A549 (cell line): ENCODE measurements at regions of chr1 and their contacts with region 1.

Region 1: DNA sequence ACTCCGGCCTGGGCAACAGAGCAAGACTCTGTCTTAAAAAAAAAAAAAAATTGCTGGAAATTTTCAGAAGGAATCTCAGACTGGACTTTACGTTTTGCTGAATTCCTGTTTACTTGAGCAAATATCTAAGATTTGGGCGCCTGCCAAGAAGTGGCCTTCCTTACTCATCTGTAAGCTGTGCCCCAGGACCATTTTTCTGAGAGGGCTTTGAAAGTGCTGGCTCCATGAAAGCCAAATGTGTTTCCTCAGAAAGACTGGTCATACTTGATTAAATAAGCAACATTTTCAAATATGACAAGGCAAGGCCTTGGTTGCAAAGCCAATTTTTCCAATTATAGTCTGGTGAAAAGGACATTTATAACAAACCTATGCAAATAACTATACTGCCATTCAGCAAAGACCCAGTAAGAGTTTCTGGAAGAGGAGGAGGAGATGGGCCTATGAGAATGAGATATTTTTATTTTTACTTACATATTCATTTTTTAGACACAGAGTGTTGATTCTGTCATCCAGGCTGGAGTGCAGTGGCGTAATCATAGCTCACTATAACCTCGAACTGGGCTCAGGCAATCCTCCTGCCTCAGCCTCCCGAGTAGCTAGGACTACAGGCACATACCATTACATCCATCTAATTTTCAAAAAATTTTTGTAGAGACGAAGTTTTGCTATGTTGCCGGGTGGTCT is 56.3 kb upstream of the HTR1D start:
- DNase-seq: peak; percentile 28 to 88
- ATAC-seq: peak; percentile 82 to 88
- H3K4me3 ChIP-seq: no peak overlapping the region
- H3K27ac ChIP-seq: peak overlapping the region; percentile 74 to 83
- H3K4me1 ChIP-seq: peaks cover 61% of the 10 kb centered on the region
- CTCF ChIP-seq: no peak
- EP300 ChIP-seq: peak; percentile 19 to 30; a peak in 2 of 5 replicates
- POLR2A ChIP-seq: no peak
- RAD21 ChIP-seq: peak; percentile 19 to 27; a peak in 3 of 5 replicates

Region 2: DNA sequence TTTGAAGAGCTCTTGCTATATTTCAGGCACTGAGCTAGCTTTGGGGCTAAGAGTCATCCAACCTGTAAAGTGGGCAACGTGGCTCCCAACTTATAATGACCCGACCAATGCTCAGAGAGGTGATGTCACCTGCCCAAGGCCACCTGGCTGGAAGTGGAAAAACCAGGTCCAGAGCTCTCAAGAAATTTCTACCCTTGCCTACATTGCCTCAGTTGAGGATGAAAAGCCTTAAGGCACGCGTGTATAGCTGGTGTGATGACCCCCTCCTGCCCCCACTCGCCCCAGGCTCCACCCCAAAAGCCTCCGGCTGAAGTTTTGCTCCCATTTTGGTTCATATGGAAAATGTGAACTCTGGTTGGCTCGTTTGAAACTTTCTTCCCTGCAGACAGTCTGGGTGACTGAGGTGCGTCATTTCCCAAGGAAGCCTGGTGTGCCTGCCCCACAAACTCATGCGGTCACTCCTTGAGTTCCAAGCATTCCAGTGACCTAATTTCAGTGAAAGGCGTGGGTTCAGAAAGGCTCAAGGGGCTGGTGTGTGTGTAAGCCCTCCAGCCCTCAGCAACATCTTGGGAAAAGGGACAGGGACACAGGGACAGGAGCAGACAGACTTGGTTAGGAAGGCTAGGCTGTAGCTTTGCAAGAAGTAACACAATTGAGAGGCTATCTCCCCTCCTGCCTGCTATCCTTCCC is 76.8 kb before region 1 on chr1:
- CTCF ChIA-PET with region 1: interaction called, 4 read pairs
- POLR2A ChIA-PET with region 1: interaction called, 10 read pairs
- DNase-seq: peak; percentile 80 to 96
- ATAC-seq: peak; percentile 77 to 84
- H3K4me3 ChIP-seq: no peak overlapping the region
- H3K27ac ChIP-seq: peak overlapping the region; percentile 97 to 98
- H3K4me1 ChIP-seq: peaks cover 65% of the 10 kb centered on the region
- CTCF ChIP-seq: no peak
- EP300 ChIP-seq: peak; percentile 66 to 83; a peak in 3 of 5 replicates
- POLR2A ChIP-seq: no peak
- RAD21 ChIP-seq: 0 out of 5 replicates have a peak, but pooled peaks of 1 of the 2 experiments have one; percentile 10